ENCODE measurements at regions of chrX and their contacts with region 1.

Region 1: GRCh38 chrX:74550295-74550802 is 64.1 kb downstream of the RLIM start:
- DNase-seq: peak; percentile 88
- ATAC-seq: peak; percentile 95
- H3K4me3 Mint-ChIP-seq: peak overlapping the region; percentile 29
- H3K27ac Mint-ChIP-seq: peak overlapping the region; percentile 61
- H3K4me1 Mint-ChIP-seq: peaks cover 2% of the 10 kb centered on the region
- H3K27me3 Mint-ChIP-seq: no peaks in the 10 kb centered on the region
- CTCF ChIP-seq: peak; percentile 87

Region 2: DNA sequence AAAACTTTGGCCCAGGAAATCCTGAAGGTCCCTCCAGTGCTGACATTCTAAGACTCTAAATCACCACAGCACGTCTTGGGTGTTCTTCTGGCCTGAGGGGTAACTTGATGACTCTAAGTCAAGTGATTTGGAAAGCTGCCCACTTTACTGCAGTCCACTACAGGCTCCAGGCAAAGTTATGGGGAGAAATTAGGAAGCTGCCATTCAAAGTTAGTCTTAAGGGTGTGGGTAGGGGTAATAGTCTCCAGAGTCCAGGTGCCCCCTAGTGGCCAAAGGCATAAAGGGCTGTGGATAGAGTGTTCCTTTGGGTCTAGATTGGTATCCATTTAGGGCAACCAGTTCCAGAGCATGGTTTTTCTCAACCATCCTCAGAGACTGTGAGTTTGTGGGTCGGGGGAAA is 167.7 kb before region 1 on chrX:
- CTCF ChIA-PET with region 1: interaction called, 7 read pairs
- POLR2A ChIA-PET with region 1: no interaction called
- intact Hi-C with region 1: loop called (anchors 5 kb)
- DNase-seq: peak; percentile 75
- ATAC-seq: peak; percentile 83
- H3K4me3 Mint-ChIP-seq: no peak overlapping the region
- H3K27ac Mint-ChIP-seq: no peak overlapping the region
- H3K4me1 Mint-ChIP-seq: no peaks in the 10 kb centered on the region
- H3K27me3 Mint-ChIP-seq: no peaks in the 10 kb centered on the region
- CTCF ChIP-seq: peak; percentile 51

Region 3: DNA sequence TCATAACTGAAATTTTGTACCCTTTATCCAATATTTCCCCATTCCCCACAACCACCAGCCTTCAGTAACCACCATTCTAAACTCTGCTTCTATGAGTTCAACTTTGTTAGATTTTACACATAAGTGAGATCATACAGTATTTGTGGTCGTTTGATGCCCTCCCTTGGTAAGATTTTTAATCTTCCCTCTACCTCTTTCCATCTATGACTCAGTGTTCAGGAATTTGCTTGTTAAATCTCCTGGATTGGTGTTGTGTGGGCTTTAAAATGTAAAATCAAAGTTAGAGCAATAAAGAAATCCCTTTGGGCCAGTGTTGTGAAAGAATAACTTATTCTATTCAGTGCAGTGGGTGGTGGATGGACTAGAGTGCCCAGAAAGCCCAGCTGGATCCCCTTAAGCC is 91.6 kb before region 1 on chrX:
- CTCF ChIA-PET with region 1: no interaction called
- POLR2A ChIA-PET with region 1: no interaction called
- intact Hi-C with region 1: no loop called
- DNase-seq: no peak
- ATAC-seq: no peak
- H3K4me3 Mint-ChIP-seq: no peak overlapping the region
- H3K27ac Mint-ChIP-seq: no peak overlapping the region
- H3K4me1 Mint-ChIP-seq: no peaks in the 10 kb centered on the region
- H3K27me3 Mint-ChIP-seq: no peaks in the 10 kb centered on the region
- CTCF ChIP-seq: no peak

Region 4: DNA sequence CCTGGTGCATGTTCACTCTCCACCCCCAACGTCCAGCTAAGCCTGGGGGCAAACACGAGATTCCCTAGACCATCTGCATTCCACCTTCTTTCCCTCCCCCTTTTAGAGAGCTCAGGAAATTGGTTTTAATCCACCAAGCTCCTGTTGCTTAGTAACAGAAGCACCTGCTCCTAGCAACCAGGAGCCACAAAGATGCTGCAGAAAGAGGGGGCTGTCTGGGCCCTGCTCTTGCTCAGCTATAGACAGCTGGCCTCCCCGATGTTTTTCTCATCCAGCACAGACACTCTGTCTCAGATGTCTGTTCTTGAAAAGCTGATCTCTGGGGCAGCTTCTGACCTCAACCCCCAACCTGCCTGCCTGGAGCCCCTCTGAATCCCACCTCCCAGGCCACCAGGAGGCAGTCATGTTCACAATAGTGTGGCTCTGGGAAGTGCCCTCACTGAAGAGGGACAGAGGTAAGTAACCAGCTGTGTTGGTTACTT is 57.6 kb before region 1 on chrX:
- CTCF ChIA-PET with region 1: interaction called, 6 read pairs
- POLR2A ChIA-PET with region 1: no interaction called
- intact Hi-C with region 1: loop called (anchors 10 kb)
- DNase-seq: peak; percentile 43
- ATAC-seq: no peak
- H3K4me3 Mint-ChIP-seq: no peak overlapping the region
- H3K27ac Mint-ChIP-seq: no peak overlapping the region
- H3K4me1 Mint-ChIP-seq: no peaks in the 10 kb centered on the region
- H3K27me3 Mint-ChIP-seq: no peaks in the 10 kb centered on the region
- CTCF ChIP-seq: peak; percentile 16

Region 5: DNA sequence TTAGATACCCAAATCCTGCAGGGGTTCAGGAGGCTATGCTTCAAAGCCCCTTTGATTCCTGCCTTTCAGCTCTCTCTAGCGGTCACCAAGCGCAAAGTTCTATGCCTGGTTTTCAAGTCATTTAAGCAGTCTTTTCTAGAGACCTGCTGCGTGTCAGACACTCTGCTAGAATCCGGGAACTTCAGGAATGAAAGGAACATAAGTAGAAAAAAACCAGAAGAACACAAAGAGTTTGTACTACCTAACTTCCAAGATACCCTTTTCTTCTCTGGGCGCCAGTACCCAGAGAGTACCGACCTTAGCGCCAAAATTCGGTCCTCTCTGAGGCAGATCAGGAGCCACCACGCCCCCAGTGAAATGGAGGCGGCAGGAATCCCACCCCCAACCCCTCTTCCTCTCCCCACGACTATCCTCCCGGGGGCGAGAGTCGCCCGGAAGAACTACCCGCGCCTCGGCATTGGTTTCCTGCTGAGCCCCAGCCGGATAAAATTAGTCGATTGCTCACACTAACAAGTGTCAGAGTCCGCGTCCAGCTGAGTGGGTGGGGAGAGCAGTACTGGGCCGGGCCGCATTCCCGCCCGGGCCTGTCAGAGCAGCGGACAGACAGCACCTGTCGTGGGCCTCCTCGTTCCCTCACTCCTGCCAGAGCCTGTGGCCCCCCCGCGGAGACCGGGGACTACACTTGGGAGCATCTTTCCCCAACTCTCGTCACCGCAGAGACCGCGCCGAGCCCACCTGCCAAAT is 14.8 kb before region 1 on chrX:
- CTCF ChIA-PET with region 1: interaction called, 12 read pairs
- POLR2A ChIA-PET with region 1: no interaction called
- intact Hi-C with region 1: no loop called
- DNase-seq: peak; percentile 66
- ATAC-seq: peak; percentile 58
- H3K4me3 Mint-ChIP-seq: peak overlapping the region; percentile 69
- H3K27ac Mint-ChIP-seq: peak overlapping the region; percentile 78
- H3K4me1 Mint-ChIP-seq: peaks cover 20% of the 10 kb centered on the region
- H3K27me3 Mint-ChIP-seq: no peaks in the 10 kb centered on the region
- CTCF ChIP-seq: no peak